ENCODE measurements at regions of chr3 and their contacts with region 1.

Region 1: GRCh38 chr3:58305882-58306711 is at the starts of genes HTD2 and RPP14:
- DNase-seq: peak; percentile 75
- H3K4me3 ChIP-seq: peak within 1 kb of the TSS; percentile 77
- H3K27me3 ChIP-seq: peaks cover 3% of the 10 kb centered on the region; the same call in 1 of the 2 replicates
- CTCF ChIP-seq: peak; percentile 97
- polyA plus RNA-seq, gene HTD2: 5.2 and 8.3 TPM in 2 replicates
- polyA plus RNA-seq, gene RPP14: 10.9 and 13.3 TPM in 2 replicates

Region 2: DNA sequence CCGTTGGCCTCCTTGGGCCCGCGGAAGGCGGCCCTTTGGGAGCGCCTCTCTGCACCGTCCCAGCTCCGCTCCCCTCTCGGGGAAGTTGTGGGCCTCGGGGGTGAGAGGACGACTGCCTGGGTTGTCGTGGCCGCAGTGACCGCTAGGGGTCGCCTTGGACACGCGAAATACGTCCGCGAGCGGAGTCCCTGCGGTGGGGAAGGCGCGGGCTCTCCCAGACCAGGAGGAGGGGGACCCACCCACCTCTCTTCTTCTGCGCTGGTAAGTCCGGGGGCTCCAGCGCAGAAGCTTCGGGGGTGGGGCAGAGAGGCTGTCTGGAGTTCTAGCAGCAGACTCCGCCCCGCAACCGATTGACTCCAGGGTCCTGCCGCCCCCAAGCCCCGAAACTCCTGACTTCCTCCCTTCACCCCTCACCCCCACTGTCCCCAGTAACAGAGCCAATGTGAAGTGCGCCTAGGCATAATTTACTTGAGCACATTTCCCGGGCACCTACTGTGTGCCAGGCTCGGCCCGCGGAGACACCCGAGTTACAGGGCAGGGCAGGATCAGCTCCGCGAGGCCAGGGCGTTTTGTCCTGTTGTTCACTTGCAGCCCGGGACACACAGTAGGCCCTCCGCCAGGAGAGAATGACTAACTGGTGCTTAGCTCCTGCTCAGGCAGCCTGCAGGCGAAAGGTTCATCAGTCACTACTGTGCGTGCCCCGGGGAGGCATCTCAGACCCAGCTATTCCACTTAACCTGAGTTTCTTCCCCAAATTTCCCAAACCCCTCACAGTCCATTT is 128.2 kb before region 1 on chr3:
- CTCF ChIA-PET with region 1: interaction called, 240 read pairs
- POLR2A ChIA-PET with region 1: no interaction called
- DNase-seq: no peak
- H3K4me3 ChIP-seq: peak overlapping the region; percentile 38
- H3K27me3 ChIP-seq: no peaks in the 10 kb centered on the region; the same call in 1 of the 2 replicates
- CTCF ChIP-seq: peak; percentile 95

Region 3: DNA sequence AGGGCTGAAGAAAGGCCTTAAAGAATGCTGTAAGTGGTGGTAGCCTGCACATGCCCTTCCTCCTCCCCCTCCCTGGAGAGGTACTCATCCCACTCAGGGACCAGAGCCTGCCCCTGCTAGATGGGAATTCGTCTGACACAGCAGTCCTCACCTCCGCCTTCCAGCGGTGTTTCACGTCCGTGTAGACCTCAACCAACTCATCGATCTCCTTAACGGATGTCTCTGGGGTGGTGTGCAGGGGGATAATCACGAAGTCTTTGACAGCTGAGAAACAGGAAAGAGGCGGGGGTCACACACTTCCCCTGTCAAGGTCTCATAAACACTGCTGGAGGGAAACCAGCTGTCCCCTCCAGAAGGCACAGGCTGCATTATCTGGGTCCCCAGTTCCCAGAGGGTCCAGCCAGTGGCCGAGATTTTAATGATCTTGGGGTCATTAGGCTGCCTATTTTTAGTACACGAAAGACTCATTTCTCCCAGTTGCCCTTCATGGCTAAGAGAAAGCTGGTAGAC is 105.2 kb before region 1 on chr3:
- CTCF ChIA-PET with region 1: interaction called, 18 read pairs
- POLR2A ChIA-PET with region 1: no interaction called
- DNase-seq: no peak
- H3K4me3 ChIP-seq: no peak overlapping the region
- H3K27me3 ChIP-seq: peaks cover 1% of the 10 kb centered on the region; the same call in 1 of the 2 replicates
- CTCF ChIP-seq: no peak

Region 4: DNA sequence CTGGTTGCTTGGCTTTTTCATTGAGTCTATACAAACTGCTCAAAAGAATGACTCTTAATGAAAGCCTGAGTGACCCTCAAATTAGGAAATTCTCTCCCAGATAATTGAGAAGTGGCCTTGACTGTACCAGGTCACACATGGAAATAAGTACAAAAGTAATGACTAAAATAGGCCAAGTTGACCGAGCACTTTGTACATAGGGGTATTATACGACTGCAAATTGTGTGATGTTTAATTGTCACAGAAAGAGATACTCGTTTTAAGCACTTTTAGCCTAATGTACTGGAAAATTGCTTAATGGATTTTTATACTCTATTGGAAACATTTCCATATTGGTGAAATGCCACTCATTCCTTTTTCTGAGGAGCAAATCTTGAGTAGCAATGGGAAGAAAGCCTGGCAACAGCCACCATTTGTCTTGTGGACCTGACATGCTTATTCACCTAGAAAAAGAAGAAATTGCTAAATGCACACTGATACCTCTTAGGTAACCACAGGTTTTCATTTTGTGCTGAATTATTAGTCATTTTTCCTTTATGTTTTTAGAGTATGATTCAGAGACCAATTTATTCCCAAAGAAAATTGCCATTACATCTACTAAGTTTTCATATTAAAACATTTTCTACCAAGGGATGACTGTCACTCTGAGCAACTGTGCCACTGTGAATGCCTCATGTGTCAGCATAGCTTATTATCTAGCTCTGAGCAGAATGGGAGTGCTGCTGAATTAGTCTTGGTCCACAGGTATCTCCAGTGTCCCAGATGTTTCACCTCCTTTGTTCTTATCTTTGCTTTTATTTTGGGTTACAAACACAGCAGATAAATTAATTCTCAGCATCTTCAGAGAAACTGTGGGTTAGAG is 17.7 kb after region 1 on chr3:
- CTCF ChIA-PET with region 1: interaction called, 66 read pairs
- POLR2A ChIA-PET with region 1: interaction called, 3 read pairs
- DNase-seq: no peak
- H3K4me3 ChIP-seq: no peak overlapping the region
- H3K27me3 ChIP-seq: no peaks in the 10 kb centered on the region
- CTCF ChIP-seq: no peak

Region 5: DNA sequence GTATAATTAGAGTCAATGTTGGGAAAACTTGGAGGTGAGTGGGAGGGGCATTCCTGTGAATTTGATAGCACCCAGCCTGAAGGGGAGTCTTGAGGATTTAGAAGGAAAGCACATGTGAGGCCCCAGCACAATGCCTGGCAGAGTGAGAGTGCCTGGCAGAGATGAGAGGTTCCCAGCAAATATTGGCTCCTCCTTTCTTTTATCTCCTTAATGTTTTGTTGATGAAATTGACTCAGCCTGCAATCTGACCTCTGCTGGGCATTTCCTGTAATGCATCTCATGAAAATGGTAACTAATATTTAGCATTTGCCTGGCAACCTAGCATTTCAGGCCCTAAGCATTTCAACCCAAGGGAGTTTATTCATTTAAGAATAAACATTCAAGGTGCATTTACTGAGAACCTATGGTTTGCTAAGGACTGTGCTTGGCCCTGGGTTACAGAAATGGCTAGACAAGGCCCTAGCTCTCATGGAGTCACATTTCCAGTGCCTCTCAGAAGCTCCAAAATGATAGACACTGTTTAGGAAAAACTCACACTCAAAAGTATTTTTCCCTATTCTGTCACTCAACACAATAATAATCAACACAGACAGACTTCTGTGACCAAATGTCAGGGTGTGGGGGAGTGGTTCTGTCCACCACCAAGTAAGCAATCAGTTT is 108.6 kb after region 1 on chr3:
- CTCF ChIA-PET with region 1: interaction called, 42 read pairs
- POLR2A ChIA-PET with region 1: no interaction called
- DNase-seq: no peak
- H3K4me3 ChIP-seq: no peak overlapping the region
- H3K27me3 ChIP-seq: no peaks in the 10 kb centered on the region
- CTCF ChIP-seq: peak; percentile 76

Region 6: GRCh38 chr3:58532794-58533220 is 226.7 kb after region 1 on chr3:
- CTCF ChIA-PET with region 1: interaction called, 69 read pairs
- POLR2A ChIA-PET with region 1: no interaction called
- DNase-seq: no peak
- H3K4me3 ChIP-seq: no peak overlapping the region
- H3K27me3 ChIP-seq: no peaks in the 10 kb centered on the region
- CTCF ChIP-seq: peak; percentile 96

Region 7: GRCh38 chr3:58848826-58849225 is 542.7 kb after region 1 on chr3:
- CTCF ChIA-PET with region 1: no interaction called
- POLR2A ChIA-PET with region 1: no interaction called
- DNase-seq: no peak
- H3K4me3 ChIP-seq: no peak overlapping the region
- H3K27me3 ChIP-seq: no peaks in the 10 kb centered on the region
- CTCF ChIP-seq: no peak